Dendritic cell treated with granulocyte-macrophage colony-stimulating factor and Interleukin-4, amounts not matched to agents 40 ng/mL and 50 ng/mL, for 4 days (primary cell): ENCODE measurements at regions of chr16 and their contacts with region 1.

Region 1: GRCh38 chr16:30874821-30875717 is 18.8 kb downstream of the BCL7C start:
- H3K4me3 Mint-ChIP-seq: peak overlapping the region; percentile 89
- H3K27ac Mint-ChIP-seq: peak overlapping the region; percentile 98
- H3K4me1 Mint-ChIP-seq: peaks cover 21% of the 10 kb centered on the region
- H3K27me3 Mint-ChIP-seq: no peaks in the 10 kb centered on the region

Region 2: GRCh38 chr16:30786936-30787612 is 88.0 kb before region 1 on chr16 and contains the start of gene ZNF629:
- intact Hi-C with region 1: loop called (anchors 1 kb)
- H3K4me3 Mint-ChIP-seq: peak within 1 kb of the TSS; percentile 91
- H3K27ac Mint-ChIP-seq: peak within 1 kb of the TSS; percentile 92
- H3K4me1 Mint-ChIP-seq: peaks cover 28% of the 10 kb centered on the region
- H3K27me3 Mint-ChIP-seq: peaks cover 2% of the 10 kb centered on the region

Region 3: DNA sequence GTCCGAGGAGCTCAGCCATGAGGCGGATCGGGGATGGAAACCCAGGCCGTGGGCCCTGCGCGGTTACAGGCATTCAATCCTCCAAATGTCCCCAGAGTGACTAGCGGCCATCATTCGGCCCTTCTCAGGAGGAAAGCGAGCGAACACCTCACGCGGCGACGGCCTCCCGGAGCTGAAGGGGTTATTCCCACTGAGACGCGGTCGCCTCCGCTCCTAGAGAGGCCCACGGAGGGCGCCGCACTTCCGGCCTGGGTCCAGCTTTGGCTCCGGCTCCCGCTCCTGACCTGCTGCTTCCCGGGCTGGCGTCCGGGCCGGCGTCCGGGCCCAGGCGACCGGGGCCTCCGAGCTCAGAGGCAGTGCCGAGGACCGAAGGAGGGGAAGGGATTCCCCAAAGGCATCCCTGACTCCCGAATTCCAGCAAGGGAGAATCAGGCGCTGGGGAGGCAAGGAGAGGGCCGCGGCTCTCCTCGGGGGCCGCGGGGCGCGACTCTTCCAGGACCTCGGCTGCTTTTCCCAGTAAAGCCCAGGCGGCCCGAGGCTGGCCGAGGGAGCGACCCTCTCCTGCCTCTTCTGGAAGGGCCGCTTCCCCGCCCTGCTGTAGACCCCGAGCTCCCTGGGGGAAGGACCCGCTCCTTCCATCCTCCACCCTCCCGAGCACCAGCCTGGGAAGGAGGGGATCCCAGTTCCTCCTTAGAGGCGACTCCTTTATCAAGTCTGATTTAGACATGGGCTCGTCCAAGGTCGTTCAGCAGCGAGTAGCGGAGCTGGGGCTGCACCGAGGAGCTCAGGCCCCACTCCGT is 69.5 kb before region 1 on chr16:
- intact Hi-C with region 1: loop called (anchors 1 kb)
- H3K4me3 Mint-ChIP-seq: peak overlapping the region; percentile 82
- H3K27ac Mint-ChIP-seq: peak overlapping the region; percentile 81
- H3K4me1 Mint-ChIP-seq: peaks cover 43% of the 10 kb centered on the region
- H3K27me3 Mint-ChIP-seq: no peaks in the 10 kb centered on the region

Region 4: GRCh38 chr16:30902029-30902972 is 27.2 kb after region 1 on chr16:
- intact Hi-C with region 1: loop called (anchors 2 kb)
- H3K4me3 Mint-ChIP-seq: peak overlapping the region; percentile 96
- H3K27ac Mint-ChIP-seq: peak overlapping the region; percentile 98
- H3K4me1 Mint-ChIP-seq: peaks cover 38% of the 10 kb centered on the region
- H3K27me3 Mint-ChIP-seq: no peaks in the 10 kb centered on the region

Region 5: DNA sequence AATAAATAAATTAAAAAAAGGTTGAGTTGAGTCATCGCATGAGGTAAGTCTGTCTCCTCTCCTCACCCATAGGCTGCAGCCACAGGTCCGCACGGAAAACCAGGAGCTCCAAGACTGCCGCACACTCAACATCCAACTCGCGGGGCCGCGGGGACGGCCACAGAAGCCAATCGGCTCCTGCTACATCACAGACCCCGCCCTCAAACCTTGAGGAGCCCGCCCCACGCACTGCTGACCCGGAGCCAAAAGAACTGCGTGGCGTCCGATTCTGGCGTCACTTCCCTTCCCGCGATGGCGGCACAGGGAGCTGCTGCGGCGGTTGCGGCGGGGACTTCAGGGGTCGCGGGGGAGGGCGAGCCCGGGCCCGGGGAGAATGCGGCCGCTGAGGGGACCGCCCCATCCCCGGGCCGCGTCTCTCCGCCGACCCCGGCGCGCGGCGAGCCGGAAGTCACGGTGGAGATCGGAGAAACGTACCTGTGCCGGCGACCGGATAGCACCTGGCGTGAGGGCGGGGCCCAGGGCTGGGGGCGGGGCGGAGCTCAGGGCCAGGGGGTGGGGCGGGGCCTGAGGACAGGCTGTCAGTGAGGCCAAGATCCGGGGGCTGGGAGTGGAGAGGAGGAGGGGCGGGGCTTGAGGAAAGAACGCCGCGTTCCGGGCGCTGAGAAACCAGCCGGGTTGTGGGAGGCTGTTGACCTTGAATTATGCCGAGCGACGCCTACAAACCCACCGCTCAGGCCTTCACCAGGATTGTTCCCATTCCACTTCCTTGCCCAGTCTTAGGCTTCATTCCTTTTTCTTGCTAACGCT is 242.5 kb after region 1 on chr16 and contains the start of gene KAT8:
- intact Hi-C with region 1: no loop called
- H3K4me3 Mint-ChIP-seq: peak within 1 kb of the TSS; percentile 91
- H3K27ac Mint-ChIP-seq: peak within 1 kb of the TSS; percentile 98
- H3K4me1 Mint-ChIP-seq: peaks cover 58% of the 10 kb centered on the region
- H3K27me3 Mint-ChIP-seq: no peaks in the 10 kb centered on the region